Right ventricle myocardium superior (tissue), 1 donor: ENCODE measurements at regions of chr16 and their contacts with region 1.

Region 1: DNA sequence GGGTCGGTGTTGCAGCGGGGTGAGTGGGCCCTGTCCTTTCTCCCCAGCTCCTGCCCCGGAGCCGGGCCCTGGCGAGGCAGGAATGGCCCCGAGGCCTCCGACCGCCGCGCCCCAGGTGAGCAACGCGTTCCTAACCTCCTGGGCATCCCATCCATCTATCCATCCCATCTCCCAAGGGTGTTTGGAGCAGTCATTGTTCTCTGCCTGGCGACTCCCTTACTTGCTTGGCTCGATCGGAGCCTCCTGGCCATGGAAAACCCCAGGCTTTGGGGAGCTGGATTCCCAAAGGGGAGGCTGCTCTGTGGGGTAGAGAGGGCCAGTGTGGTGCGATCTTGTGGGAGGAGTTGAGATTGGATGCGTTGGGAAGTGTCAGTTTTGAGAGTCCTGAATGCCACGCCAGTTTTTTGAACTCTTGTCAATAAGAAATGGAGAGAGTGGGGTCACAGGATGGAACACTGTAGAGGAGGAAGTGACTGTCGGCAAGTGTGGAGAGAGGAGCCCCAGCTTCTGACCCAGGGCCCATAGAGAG is 684 bp downstream of the ZFP90 start:
- DNase-seq: peak; percentile 45
- ATAC-seq: peak; percentile 28

Region 2: DNA sequence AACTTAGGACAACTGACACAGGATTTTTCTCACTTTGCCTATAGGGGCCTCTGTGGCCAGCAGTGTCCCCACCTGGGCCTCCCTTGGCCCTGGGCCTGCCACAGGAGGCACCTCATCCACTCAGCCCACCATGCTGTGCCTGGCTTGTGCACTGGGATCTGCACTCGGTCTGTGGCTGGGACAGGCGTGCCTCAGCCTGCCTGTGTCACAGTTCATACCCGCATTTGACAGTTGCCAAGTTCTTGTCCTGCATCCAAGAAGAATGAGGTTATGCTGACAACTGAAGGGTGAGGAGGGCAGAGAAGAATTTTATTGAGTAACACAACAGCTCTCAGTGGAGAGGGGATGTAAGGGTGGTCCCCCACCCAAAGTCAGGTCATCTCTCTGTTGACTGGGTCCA is 35.3 kb after region 1 on chr16:
- intact Hi-C with region 1: no loop called
- DNase-seq: no peak
- ATAC-seq: no peak

Region 3: DNA sequence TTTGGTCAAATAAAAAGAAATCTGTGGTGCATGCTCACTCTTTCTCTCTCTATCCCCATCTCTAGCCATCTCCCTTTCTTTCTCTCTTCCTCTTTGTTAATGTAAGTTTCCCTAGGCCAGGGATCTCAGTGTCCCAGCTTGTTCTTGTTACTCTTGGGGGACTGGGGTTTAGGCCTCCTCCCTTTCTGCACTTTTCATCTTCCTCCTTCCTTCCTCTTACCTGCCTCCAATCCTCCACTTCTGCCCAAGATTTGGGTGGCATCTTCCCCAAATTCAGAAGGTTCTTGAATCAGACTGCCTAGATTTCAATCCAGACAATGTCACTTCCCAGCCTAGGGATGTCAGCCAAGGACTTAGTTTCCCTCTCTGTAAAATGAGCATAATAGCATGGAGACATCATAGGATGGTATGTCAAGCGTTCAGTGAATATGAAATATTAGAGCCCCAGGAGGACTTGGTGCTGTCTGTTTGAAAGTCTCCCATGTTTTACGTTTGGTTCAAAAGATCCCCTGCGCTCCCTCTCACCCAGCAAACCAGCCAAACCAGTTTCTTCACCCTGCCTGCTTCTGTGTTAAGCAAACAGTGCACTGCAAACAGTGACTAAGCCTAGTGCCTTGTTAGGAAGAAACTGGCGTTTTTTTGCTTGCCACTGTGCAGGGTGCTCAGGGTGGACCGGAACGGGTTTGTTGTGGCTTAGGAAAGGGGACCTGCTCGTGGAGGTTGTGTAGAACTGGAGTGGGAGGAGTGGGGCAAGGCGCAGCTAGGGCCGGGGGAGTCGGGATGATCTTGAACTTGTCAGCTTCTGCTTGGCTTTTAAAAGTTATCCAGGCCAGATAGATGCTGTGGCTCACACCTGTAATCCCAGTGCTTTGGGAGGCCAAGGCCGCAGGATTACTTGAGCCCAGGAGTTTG is 204.8 kb after region 1 on chr16:
- intact Hi-C with region 1: no loop called
- DNase-seq: no peak
- ATAC-seq: no peak

Region 4: GRCh38 chr16:68843482-68844210 is 303.9 kb after region 1 on chr16 and contains the start of gene TANGO6:
- intact Hi-C with region 1: loop called (anchors 10 kb)
- DNase-seq: peak; percentile 92
- ATAC-seq: peak; percentile 99
- total RNA-seq, gene TANGO6: 8.4 TPM